ENCODE measurements at regions of chr5 and their contacts with region 1.

Region 1: GRCh38 chr5:179795863-179796833 is 2.4 kb downstream of the LTC4S start:
- DNase-seq: peak; percentile 88
- CTCF ChIP-seq: peak; percentile 94

Region 2: DNA sequence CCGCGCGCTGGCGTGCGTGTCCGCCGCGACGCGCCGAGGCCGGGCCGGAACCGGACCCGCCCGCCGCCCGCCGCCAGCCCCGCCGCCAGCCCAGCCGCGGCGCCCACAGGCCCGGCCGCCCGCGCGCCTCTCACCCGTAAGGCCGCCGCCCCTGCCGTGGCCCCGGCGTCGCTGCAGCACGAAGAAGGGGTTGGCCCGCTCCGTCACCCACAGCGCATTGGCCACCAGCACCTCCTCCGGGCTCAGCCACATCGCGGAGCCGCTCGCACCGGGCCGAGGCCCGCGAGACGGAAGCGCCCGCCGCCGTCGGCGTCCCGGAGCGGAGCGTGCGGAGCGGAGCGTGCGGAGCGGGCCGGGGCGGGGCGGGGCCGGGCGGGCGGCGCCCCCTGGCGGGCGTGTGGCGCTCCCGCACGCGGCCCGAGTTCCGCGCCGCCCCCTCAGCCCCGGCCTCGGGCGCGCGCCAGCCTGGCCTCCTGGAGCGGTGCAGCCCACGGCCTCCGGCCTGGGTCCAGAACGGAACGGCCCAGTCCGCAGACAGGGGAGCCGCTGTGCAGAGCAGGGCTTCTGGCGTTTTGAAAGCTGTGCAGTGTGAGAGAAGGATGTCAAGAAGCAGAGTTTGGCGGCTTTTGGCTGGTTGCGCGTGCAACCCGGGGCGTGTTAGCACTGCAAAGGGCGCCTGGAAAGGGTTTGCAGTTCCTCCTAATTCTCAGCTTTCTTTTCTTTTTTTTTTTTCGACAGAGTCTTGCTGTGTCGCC is 111.6 kb after region 1 on chr5 and contains the start of gene TBC1D9B:
- in situ Hi-C with region 1: loop called (anchors 10 kb)
- DNase-seq: peak; percentile 90
- CTCF ChIP-seq: peak; percentile 62

Region 3: DNA sequence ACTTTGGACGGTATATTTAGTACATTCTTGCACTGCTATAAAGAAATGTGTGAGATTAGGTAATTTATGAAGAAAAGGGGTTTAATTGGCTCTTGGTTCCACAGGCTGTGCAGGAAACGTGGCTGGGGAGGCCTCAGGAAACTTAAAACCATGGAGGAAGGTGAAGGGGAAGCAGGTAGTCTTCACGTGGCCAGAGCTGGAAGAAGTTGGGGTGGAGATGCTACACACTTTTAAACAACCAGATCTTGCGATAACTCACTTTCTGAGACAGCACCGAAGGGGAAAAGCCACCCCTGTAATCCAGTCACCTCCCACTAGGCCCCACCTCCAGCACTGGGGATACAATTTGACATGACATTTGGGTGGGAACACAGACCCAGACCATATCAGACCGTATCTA is 711.5 kb after region 1 on chr5:
- in situ Hi-C with region 1: no loop called
- DNase-seq: no peak
- CTCF ChIP-seq: no peak